Activated naive CD4-positive, alpha-beta T cell treated with anti-CD3 and anti-CD28 coated beads for 36 hours (primary cell): ENCODE measurements at regions of chr5 and their contacts with region 1.

Region 1: DNA sequence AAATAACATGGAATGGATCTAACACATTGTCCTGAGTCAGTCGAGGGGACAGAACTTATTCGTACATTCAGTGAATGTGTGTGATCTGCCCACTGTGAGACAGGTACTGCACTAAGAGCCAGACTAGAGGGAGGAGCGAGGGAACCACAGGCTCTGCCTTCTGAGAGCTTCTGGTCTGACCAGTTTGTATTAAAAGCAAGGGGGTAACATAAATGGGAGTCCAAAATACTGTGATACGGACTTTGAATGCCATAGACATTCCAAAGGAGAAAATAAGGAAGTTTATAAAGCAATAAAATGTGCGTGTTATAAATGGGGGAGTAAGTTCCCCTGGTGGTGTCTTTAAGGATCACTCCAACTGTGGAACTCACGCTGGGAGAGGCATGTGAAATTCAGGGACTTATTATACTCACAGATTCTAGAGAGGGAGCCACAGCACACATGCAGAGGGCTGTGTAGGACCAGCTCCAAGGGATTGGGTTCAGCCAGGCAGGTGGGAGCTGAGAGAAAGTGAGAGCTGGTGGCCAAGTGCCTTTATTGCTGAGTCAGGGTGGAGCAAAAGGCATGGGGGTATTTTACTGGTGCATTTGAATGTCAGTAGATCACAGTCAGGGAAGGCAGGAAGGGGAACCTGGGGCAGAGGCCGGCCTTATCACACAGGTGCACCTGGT is 186.5 kb upstream of the WWC1 start:
- DNase-seq: no peak
- H3K4me3 Mint-ChIP-seq: no peak overlapping the region
- H3K27ac Mint-ChIP-seq: no peak overlapping the region
- H3K4me1 Mint-ChIP-seq: no peaks in the 10 kb centered on the region
- H3K27me3 Mint-ChIP-seq: peaks cover 4% of the 10 kb centered on the region

Region 2: DNA sequence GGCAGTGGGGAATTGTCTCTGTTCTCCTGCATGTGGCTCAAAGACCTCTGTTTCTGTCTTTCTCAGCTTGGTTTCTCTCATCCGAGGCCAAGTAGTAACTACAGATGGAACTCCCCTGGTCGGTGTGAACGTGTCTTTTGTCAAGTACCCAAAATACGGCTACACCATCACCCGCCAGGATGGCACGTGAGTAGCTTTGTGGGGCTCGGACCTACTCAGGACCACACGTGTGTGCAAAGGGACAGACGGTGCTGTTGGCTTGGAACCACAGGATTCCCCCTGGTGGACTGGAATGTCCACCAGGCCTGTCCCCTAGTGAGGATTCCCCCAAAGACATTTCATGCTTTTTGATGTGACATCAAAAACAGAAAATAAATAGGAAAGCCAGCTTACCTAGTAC is 90.2 kb after region 1 on chr5:
- CTCF ChIA-PET with region 1: no interaction called
- intact Hi-C with region 1: loop called (anchors 1 kb)
- DNase-seq: no peak
- H3K4me3 Mint-ChIP-seq: no peak overlapping the region
- H3K27ac Mint-ChIP-seq: no peak overlapping the region
- H3K4me1 Mint-ChIP-seq: no peaks in the 10 kb centered on the region
- H3K27me3 Mint-ChIP-seq: no peaks in the 10 kb centered on the region